Right ventricle myocardium inferior (tissue), 1 donor: ENCODE measurements at regions of chr5 and their contacts with region 1.

Region 1: GRCh38 chr5:54646356-54647101 is 129.0 kb downstream of the SNX18 start:
- DNase-seq: peak; percentile 88
- ATAC-seq: peak; percentile 98

Region 2: DNA sequence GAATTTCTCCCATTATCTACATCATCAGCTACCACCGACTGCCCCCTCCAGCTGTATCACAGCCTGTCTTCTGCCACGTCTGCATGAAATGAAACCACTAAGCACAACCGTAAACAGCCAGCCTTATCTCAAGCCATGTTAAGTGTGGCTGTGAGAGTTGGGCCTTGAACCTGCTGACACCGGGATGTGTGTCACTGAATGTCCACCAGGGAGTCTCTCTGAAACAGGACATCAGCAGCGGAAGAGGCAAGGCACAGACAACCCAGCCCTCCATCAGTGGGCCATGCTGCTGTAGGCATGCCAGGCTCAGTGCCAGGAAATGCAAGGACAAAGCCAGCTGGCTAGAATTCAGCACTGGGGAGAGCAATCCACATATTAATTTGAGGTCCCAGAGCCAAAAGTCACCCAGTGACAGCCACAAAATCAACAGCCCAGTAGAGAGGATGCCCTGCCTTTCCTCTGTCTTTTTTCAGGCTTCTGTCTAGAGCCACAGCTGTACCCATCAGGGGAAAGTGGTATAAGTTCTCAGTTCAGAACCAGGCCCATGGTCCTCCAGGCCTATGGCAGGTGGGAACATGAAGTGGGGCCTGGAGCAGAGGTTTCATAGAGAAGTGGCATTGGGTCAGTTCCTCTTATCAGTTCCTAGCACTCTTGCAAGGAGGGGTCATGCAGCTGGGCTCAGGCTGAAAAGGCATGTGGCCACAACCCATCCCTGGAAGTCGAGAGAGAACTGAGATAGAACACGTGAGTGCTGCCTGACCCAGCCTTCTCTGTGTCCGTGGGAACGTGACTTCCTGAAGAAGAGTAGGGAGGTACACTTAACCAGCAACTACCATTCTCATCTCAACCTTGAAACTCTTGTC is 139.4 kb after region 1 on chr5:
- intact Hi-C with region 1: loop called (anchors 5 kb)
- DNase-seq: peak; percentile 65
- ATAC-seq: peak; percentile 96